ENCODE measurements at regions of chr3 and their contacts with region 1.

Region 1: DNA sequence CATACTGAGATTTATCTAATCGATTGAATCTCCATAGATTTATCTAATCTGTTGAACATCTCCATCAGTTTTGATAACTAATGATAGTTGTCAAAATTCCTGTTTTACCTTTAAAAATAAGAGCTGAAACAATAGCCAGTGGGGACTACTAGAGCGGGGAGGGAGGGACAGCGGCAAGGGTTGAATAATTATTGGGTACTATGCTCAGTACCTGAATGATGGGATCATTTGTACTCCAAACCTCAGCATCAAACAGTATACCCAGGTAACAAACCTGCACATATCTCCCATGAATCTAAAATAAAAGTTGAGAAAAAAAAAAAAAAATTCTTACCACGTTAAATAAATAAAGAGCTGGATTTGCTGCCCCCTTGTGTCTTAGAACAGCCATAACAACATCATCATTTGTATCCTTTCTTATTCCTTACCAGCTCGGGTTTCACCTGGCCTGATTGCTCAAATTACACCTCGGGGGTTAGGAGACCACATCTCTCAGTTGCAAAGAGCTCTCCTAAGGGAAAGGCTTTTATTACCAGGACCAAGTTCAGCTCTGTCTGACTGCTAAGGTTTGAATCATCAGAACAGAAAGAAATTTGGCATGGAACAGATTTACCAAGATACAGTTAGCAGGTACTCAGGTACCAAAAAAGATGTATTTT is 25.7 kb upstream of the RPL39L start:
- DNase-seq: peak; percentile 35
- H3K4me3 ChIP-seq: no peak overlapping the region
- H3K27ac ChIP-seq: no peak overlapping the region
- H3K4me1 ChIP-seq: no peaks in the 10 kb centered on the region
- H3K27me3 ChIP-seq: no peaks in the 10 kb centered on the region
- CTCF ChIP-seq: peak; percentile 52

Region 2: DNA sequence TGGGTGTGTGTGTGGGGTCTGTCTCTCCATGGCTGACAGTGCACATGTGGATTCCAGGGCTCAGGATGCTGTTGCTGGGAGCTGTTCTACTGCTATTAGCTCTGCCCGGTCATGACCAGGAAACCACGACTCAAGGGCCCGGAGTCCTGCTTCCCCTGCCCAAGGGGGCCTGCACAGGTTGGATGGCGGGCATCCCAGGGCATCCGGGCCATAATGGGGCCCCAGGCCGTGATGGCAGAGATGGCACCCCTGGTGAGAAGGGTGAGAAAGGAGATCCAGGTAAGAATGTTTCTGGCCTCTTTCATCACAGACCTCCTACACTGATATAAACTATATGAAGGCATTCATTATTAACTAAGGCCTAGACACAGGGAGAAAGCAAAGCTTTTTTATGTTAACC is 312.0 kb before region 1 on chr3:
- intact Hi-C with region 1: loop called (anchors 5 kb)
- DNase-seq: no peak
- H3K4me3 ChIP-seq: no peak overlapping the region
- H3K27ac ChIP-seq: no peak overlapping the region
- H3K4me1 ChIP-seq: no peaks in the 10 kb centered on the region
- H3K27me3 ChIP-seq: no peaks in the 10 kb centered on the region
- CTCF ChIP-seq: no peak

Region 3: DNA sequence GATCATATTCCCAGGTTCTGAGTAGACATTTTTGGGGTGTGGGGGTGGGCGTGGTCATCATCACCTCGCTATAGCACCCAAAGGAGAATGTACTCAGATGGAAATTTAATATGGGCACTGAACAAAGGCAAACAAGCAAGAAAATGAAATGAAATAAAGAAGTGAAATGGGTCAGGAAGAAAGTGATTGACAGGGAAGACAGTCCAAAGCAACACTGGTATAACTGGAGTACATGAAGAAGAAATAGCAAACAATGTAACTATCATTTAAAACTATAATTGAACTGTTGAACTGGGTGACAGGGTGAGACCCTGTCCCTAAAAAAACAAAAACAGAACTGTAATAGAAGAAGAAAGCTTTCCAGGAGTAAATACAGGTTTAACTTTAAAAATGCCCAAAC is 50.5 kb before region 1 on chr3:
- intact Hi-C with region 1: loop called (anchors 2 kb)
- DNase-seq: no peak
- H3K4me3 ChIP-seq: no peak overlapping the region
- H3K27ac ChIP-seq: no peak overlapping the region
- H3K4me1 ChIP-seq: no peaks in the 10 kb centered on the region
- H3K27me3 ChIP-seq: no peaks in the 10 kb centered on the region
- CTCF ChIP-seq: no peak

Region 4: DNA sequence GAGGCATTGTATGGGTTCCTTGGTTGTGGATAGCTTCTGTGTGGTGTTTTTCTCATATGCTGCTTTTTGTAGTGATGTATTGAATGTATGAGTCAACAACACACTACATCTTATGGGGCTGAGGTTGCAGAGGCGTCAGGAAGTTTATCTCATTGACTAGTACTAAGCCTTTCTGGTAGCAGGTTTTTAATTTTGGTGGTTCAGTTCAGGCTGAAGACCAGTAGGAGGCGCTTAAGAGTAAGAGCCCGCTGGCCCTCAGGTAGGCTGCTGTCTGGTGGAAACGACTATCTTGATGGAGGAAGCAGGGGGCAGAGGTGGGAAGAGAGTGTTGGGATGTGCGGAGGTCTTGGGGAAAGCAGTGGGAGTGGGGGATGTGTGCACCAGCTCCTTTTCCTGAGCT is 265.6 kb after region 1 on chr3:
- intact Hi-C with region 1: no loop called
- DNase-seq: no peak
- H3K4me3 ChIP-seq: no peak overlapping the region
- H3K27ac ChIP-seq: no peak overlapping the region
- H3K4me1 ChIP-seq: no peaks in the 10 kb centered on the region
- H3K27me3 ChIP-seq: no peaks in the 10 kb centered on the region
- CTCF ChIP-seq: no peak

Measured in colonic mucosa (tissue), 4 donors.